H1 (cell line): ENCODE measurements at regions of chr4 and their contacts with region 1.

Region 1: GRCh38 chr4:163554870-163555465 is 60.5 kb downstream of the TMA16 start:
- DNase-seq: no peak
- H3K4me3 ChIP-seq: no peak overlapping the region
- H3K27ac ChIP-seq: no peak overlapping the region
- H3K4me1 ChIP-seq: no peaks in the 10 kb centered on the region
- H3K27me3 ChIP-seq: no peaks in the 10 kb centered on the region
- CTCF ChIP-seq: peak in 2 of 3 experiments; percentile 15 to 46; a peak in 2 of 4 replicates
- EP300 ChIP-seq: no peak
- POLR2A ChIP-seq: no peak
- RAD21 ChIP-seq: peak in 1 of 2 experiments; percentile 70

Region 2: GRCh38 chr4:163568843-163569242 is 13.9 kb after region 1 on chr4:
- CTCF ChIA-PET with region 1: interaction called, 39 read pairs
- POLR2A ChIA-PET with region 1: no interaction called
- DNase-seq: no peak
- H3K4me3 ChIP-seq: no peak overlapping the region
- H3K27ac ChIP-seq: no peak overlapping the region
- H3K4me1 ChIP-seq: peaks cover 0 to 5% (median 4%) of the 10 kb centered on the region in 4 experiments; a peak in 4 of 7 replicates
- H3K27me3 ChIP-seq: no peaks in the 10 kb centered on the region
- CTCF ChIP-seq: no peak
- EP300 ChIP-seq: no peak
- POLR2A ChIP-seq: no peak
- RAD21 ChIP-seq: no peak

Region 3: DNA sequence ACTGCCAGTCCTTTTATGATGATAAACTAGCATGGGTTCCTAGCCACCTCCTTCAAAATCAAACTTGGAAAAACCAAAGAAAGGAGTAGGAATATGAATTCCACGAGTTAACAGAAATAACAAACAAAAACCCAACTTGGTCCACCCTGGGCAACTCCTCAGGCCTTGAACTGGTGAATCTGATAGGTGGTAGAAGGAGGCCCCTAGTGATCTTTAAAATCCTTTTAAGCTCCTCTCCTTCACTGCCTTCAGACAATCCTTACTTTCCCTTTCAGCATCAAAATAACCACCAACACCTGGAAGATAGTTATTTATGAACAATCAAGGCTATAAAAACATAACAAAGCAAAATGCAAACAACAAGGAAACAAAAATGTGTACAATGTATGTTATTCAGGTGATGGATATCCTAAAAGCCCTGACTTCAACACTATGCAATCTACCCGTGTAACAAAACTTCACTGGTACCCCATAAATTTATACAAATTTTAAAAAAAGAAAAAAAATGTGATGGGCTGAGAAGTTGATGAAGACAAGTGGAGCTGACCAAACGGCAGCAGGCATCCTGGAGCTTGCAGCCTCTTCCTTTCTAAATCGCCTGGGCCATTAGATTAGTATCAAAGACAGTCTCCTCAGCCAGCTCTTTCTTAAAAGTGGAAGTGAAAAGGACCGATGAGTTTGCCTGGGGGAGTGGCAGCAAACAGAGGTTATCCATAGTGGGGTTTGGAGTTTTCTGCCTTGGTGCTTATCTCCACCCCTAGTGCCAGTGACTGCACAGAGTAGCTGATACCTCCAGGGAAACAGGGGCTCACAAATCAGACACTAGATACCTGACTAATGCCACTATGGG is 119.1 kb after region 1 on chr4:
- CTCF ChIA-PET with region 1: interaction called, 41 read pairs
- POLR2A ChIA-PET with region 1: interaction called, 3 read pairs
- DNase-seq: no peak
- H3K4me3 ChIP-seq: no peak overlapping the region
- H3K27ac ChIP-seq: no peak overlapping the region
- H3K4me1 ChIP-seq: no peaks in the 10 kb centered on the region
- H3K27me3 ChIP-seq: no peaks in the 10 kb centered on the region
- CTCF ChIP-seq: no peak
- EP300 ChIP-seq: no peak
- POLR2A ChIP-seq: no peak
- RAD21 ChIP-seq: no peak

Region 4: DNA sequence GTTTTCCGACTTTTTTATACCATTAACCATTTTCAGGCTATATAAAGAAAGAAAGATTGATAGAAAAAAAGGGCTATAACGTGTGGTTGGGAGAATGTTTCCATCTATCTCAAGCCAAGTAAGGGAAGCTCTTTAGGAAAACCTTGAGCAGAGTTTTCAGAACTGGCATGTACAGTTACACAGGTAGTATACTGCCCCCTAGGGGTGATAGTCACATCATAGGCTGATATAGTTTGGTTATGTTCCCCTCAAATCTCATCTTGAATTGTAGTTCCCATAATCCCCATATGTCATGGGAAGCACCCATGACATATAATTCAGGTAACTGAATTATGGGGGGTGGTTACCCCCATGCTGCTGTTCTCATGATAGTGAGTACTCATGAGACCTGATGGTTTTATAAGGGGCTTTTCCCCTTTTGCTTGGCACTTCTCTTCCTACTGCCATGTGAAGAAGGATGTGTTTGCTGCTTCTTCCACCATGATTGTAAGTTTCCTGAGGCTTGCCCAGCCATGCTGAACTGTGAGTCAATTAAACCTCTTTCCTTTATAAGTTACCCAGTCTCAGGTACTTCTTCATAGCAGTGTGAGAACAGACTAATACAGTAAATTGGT is 126.3 kb after region 1 on chr4:
- CTCF ChIA-PET with region 1: interaction called, 119 read pairs
- POLR2A ChIA-PET with region 1: interaction called, 4 read pairs
- DNase-seq: no peak
- H3K4me3 ChIP-seq: no peak overlapping the region
- H3K27ac ChIP-seq: no peak overlapping the region
- H3K4me1 ChIP-seq: no peaks in the 10 kb centered on the region
- H3K27me3 ChIP-seq: no peaks in the 10 kb centered on the region
- CTCF ChIP-seq: peak in 2 of 3 experiments; percentile 56 to 68; a peak in 3 of 4 replicates
- EP300 ChIP-seq: no peak
- POLR2A ChIP-seq: no peak
- RAD21 ChIP-seq: peak; percentile 71 to 76

Region 5: GRCh38 chr4:163755013-163755412 is 200.0 kb after region 1 on chr4:
- CTCF ChIA-PET with region 1: interaction called, 14 read pairs
- POLR2A ChIA-PET with region 1: interaction called, 3 read pairs
- DNase-seq: no peak
- H3K4me3 ChIP-seq: no peak overlapping the region
- H3K27ac ChIP-seq: no peak overlapping the region
- H3K4me1 ChIP-seq: no peaks in the 10 kb centered on the region
- H3K27me3 ChIP-seq: no peaks in the 10 kb centered on the region
- CTCF ChIP-seq: peak in 2 of 3 experiments; percentile 39 to 48; a peak in 3 of 4 replicates
- EP300 ChIP-seq: no peak
- POLR2A ChIP-seq: no peak
- RAD21 ChIP-seq: peak; percentile 66 to 67